WTC11 (cell line): ENCODE measurements at regions of chr7 and their contacts with region 1.

Region 1: GRCh38 chr7:100705753-100706671 is at the start of gene POP7:
- DNase-seq: peak; percentile 99
- ATAC-seq: peak; percentile 97
- H3K4me3 Mint-ChIP-seq: peak within 1 kb of the TSS; percentile 96
- H3K27ac Mint-ChIP-seq: peak within 1 kb of the TSS; percentile 88
- H3K4me1 Mint-ChIP-seq: peaks cover 8% of the 10 kb centered on the region
- H3K27me3 Mint-ChIP-seq: no peaks in the 10 kb centered on the region
- CTCF ChIP-seq: no peak
- total RNA-seq, gene POP7: 71.9 to 79.2 TPM (median 78.1 TPM) in 3 replicates

Region 2: GRCh38 chr7:100586266-100587025 is 119.6 kb before region 1 on chr7 and contains the start of gene FBXO24:
- CTCF ChIA-PET with region 1: interaction called, 36 read pairs
- POLR2A ChIA-PET with region 1: interaction called, 7 read pairs
- DNase-seq: peak; percentile 99
- ATAC-seq: peak; percentile 85
- H3K4me3 Mint-ChIP-seq: peak within 1 kb of the TSS; percentile 99
- H3K27ac Mint-ChIP-seq: peak within 1 kb of the TSS; percentile 100
- H3K4me1 Mint-ChIP-seq: peaks cover 42% of the 10 kb centered on the region
- H3K27me3 Mint-ChIP-seq: peaks cover 30% of the 10 kb centered on the region
- CTCF ChIP-seq: no peak
- total RNA-seq, gene FBXO24: 0.70 to 1.3 TPM (median 0.94 TPM) in 3 replicates

Region 3: GRCh38 chr7:100632951-100633717 is 72.9 kb before region 1 on chr7:
- CTCF ChIA-PET with region 1: interaction called, 24 read pairs
- POLR2A ChIA-PET with region 1: interaction called, 4 read pairs
- DNase-seq: peak; percentile 67
- ATAC-seq: peak; percentile 40
- H3K4me3 Mint-ChIP-seq: peak overlapping the region; percentile 76
- H3K27ac Mint-ChIP-seq: no peak overlapping the region
- H3K4me1 Mint-ChIP-seq: peaks cover 3% of the 10 kb centered on the region
- H3K27me3 Mint-ChIP-seq: peaks cover 41% of the 10 kb centered on the region
- CTCF ChIP-seq: no peak; the same call in 1 of the 2 replicates

Region 4: GRCh38 chr7:100691676-100692577 is 14.1 kb before region 1 on chr7:
- CTCF ChIA-PET with region 1: interaction called, 108 read pairs
- POLR2A ChIA-PET with region 1: interaction called, 30 read pairs
- DNase-seq: peak; percentile 91
- ATAC-seq: peak; percentile 78
- H3K4me3 Mint-ChIP-seq: peak overlapping the region; percentile 96
- H3K27ac Mint-ChIP-seq: peak overlapping the region; percentile 97
- H3K4me1 Mint-ChIP-seq: peaks cover 42% of the 10 kb centered on the region
- H3K27me3 Mint-ChIP-seq: no peaks in the 10 kb centered on the region
- CTCF ChIP-seq: peak; percentile 91

Region 5: GRCh38 chr7:100781255-100781654 is 75.2 kb after region 1 on chr7:
- CTCF ChIA-PET with region 1: interaction called, 58 read pairs
- POLR2A ChIA-PET with region 1: interaction called, 4 read pairs
- DNase-seq: no peak
- ATAC-seq: peak; percentile 62
- H3K4me3 Mint-ChIP-seq: no peak overlapping the region
- H3K27ac Mint-ChIP-seq: no peak overlapping the region
- H3K4me1 Mint-ChIP-seq: peaks cover 12% of the 10 kb centered on the region
- H3K27me3 Mint-ChIP-seq: peaks cover 5% of the 10 kb centered on the region; the same call in 1 of the 2 replicates
- CTCF ChIP-seq: no peak

Region 6: DNA sequence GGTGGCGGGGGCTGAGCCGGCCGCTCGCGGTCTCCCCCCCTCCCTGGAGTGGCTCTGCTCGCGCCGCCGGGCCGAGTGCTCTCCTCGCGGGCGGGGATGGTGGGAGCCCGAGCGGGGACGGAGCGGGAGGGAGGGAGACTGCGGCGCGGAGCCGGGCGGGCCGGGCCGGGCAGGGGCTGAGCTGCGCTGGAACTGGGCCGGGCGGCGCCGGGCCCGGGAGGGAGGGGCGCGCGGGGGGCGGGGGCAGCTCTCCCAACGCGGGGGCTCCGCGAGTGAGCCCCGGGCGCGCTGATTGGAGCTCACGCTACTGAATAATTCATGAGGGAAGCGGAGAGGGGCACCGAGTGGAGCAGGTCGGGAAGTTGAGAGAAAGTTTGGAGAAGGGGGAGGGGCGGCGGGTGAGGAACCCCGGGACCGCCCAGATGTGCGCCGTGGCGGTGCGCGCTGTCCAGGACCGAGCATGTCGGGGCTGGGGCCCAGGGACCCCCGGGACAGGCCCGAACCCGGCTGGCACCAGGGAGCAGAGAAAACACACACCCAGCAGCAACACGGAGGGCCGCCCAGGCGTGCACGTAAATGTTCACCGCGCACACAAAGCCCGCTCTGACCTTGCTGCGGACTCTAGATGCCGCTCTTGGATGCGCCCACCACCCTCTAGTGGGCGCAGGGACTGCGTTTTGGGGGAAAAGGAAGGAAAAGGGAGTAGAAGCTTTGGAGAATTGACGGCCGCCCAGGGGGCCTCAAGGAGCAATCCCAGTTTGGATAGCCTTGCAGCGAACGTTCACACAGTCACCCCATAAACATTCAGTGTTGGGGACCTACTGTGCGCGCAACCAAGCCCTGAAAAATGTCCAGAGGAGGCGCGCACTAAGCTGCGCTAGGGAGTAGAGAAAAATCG is 121.6 kb after region 1 on chr7 and contains the start of gene EPHB4:
- CTCF ChIA-PET with region 1: interaction called, 34 read pairs
- POLR2A ChIA-PET with region 1: interaction called, 8 read pairs
- DNase-seq: peak; percentile 90
- ATAC-seq: peak; percentile 82
- H3K4me3 Mint-ChIP-seq: peak within 1 kb of the TSS; percentile 98
- H3K27ac Mint-ChIP-seq: peak within 1 kb of the TSS; percentile 99
- H3K4me1 Mint-ChIP-seq: peaks cover 28% of the 10 kb centered on the region
- H3K27me3 Mint-ChIP-seq: no peaks in the 10 kb centered on the region
- CTCF ChIP-seq: no peak
- total RNA-seq, gene EPHB4: 99.7 to 120 TPM (median 104 TPM) in 3 replicates

Region 7: DNA sequence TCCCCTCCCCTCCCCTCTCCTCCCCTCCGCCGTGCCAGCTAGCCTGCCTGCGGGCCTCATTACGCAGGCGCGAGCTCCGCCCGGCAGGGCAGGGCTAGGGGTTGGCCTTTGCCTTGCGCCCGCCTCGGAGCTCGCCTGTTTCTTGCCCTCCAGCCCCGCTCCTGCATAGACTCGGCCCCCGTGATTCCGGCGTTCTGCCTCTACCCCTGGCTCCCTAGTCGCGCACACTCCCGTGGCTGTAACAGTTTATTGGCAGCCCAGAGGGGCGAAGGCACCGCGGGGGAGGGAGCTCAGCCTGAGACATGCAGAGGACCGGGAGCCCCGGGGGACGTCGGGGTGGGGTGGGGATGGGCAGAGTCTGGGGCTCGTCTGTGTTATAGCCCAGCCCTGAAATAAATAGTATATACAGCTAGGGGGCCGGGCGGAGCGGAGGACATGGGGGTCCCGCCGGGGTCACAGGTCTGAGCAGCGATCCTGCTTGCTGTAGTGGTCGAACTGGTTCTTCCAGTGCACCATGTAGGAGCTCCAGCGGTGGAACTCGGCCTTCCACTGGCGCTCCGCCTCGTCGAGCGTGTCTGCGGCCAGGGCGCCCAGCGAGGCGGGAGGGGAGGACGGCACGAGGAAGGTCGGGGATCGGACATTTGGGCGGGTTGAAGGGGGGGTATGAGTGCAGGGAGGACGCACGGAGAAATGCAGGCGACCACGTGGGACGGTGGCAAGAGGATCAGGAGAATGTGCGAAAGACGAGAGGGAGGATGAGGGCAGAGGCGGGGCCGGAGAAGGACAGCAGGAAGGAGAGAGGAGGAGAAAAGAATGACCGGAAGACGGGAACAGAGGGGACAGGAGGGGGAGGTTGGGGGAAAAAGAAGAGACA is 184.0 kb after region 1 on chr7:
- CTCF ChIA-PET with region 1: interaction called, 14 read pairs
- POLR2A ChIA-PET with region 1: interaction called, 9 read pairs
- DNase-seq: peak; percentile 92
- ATAC-seq: peak; percentile 82
- H3K4me3 Mint-ChIP-seq: peak overlapping the region; percentile 88
- H3K27ac Mint-ChIP-seq: peak overlapping the region; percentile 97
- H3K4me1 Mint-ChIP-seq: peaks cover 41% of the 10 kb centered on the region
- H3K27me3 Mint-ChIP-seq: peaks cover 5% of the 10 kb centered on the region
- CTCF ChIP-seq: no peak